Activated CD4-positive, alpha-beta memory T cell treated with anti-CD3 and anti-CD28 coated beads for 36 hours (primary cell): ENCODE measurements at regions of chr2 and their contacts with region 1.

Region 1: GRCh38 chr2:216412022-216412999 is at the start of gene SMARCAL1:
- DNase-seq: peak; percentile 99
- H3K4me3 Mint-ChIP-seq: peak within 1 kb of the TSS; percentile 95
- H3K27ac Mint-ChIP-seq: peak within 1 kb of the TSS; percentile 94
- H3K4me1 Mint-ChIP-seq: peaks cover 8% of the 10 kb centered on the region
- H3K27me3 Mint-ChIP-seq: peaks cover 2% of the 10 kb centered on the region
- total RNA-seq, gene SMARCAL1: 20.8 to 25.2 TPM

Region 2: DNA sequence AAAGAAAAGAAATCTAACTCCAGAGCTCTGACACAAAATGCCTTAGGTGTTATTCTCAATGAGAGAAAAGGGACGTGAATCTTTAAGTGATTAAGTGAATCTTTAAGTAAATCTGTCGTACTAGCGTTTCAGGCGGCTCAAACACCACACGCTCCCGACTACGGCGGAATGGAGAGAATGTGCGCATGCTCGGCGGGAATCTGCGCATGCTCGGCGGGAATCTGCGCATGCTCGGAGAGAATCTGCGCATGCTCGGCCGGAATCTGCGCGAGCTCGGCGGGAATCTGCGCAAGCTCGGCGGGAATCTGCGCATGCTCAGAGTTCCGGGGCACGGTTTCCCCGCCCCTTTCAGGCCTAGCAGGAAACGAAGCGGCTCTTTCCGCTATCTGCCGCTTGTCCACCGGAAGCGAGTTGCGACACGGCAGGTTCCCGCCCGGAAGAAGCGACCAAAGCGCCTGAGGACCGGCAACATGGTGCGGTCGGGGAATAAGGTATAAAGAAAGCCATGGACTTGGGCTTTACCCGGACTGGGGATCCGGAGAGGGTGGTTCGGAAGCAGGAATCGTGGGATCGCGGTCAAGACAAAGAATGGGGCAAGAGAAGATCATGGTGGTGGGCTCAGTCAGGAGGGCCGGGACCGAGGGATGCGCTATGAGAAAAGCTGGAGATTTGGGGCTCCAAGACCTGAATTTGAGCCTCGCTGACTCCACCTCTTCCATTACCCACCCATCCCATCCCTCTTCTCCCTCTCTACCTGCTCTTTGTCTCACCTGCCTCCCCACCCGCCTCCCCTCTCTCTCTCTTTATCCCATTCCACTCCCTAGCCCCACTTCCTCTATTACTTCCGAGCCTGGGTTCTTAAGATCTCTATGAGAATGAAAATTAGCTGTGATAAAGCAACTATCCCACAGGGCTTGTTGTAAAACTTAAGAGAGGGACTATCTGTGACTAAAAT is 303.1 kb before region 1 on chr2 and contains the start of gene XRCC5:
- CTCF ChIA-PET with region 1: interaction called, 4 read pairs
- POLR2A ChIA-PET with region 1: no interaction called
- intact Hi-C with region 1: loop called (anchors 1 kb)
- DNase-seq: peak; percentile 99
- H3K4me3 Mint-ChIP-seq: peak within 1 kb of the TSS; percentile 100
- H3K27ac Mint-ChIP-seq: peak within 1 kb of the TSS; percentile 100
- H3K4me1 Mint-ChIP-seq: peaks cover 51% of the 10 kb centered on the region
- H3K27me3 Mint-ChIP-seq: peaks cover 2% of the 10 kb centered on the region
- total RNA-seq, gene XRCC5: 510 to 515 TPM

Region 3: DNA sequence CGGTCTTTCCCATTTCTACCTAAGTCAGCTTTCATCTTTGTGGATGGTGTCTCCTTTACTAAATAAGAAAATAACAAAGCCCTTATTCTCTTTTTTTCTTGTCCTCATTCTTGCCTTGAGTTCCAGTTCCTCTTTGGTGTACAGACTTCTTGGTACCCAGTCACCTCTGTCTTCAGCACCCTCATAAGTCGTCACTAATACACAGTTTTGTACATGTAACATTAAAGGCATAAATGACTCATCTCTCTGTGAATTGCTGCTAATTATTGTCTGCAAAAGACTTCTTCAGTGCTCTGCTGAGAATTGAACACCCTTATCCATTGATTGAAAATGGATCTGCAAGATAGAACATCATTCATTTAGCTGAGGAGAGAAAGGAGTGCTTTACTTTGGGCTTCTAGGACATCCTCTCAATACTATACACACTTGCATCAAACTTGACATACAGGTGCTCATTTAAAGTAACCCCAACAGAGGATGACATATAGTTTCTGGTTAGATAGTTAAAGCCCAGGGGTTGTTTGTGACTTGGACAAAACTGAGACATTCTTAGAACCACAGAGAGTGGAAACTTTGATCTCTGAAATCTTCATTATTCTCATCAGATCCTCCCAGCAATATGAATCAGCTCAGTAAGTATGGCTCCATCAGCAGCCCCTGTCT is 206.1 kb before region 1 on chr2:
- CTCF ChIA-PET with region 1: no interaction called
- POLR2A ChIA-PET with region 1: no interaction called
- intact Hi-C with region 1: loop called (anchors 1 kb)
- DNase-seq: no peak
- H3K4me3 Mint-ChIP-seq: peak overlapping the region; percentile 9
- H3K27ac Mint-ChIP-seq: peak overlapping the region; percentile 92
- H3K4me1 Mint-ChIP-seq: peaks cover 63% of the 10 kb centered on the region
- H3K27me3 Mint-ChIP-seq: no peaks in the 10 kb centered on the region

Region 4: DNA sequence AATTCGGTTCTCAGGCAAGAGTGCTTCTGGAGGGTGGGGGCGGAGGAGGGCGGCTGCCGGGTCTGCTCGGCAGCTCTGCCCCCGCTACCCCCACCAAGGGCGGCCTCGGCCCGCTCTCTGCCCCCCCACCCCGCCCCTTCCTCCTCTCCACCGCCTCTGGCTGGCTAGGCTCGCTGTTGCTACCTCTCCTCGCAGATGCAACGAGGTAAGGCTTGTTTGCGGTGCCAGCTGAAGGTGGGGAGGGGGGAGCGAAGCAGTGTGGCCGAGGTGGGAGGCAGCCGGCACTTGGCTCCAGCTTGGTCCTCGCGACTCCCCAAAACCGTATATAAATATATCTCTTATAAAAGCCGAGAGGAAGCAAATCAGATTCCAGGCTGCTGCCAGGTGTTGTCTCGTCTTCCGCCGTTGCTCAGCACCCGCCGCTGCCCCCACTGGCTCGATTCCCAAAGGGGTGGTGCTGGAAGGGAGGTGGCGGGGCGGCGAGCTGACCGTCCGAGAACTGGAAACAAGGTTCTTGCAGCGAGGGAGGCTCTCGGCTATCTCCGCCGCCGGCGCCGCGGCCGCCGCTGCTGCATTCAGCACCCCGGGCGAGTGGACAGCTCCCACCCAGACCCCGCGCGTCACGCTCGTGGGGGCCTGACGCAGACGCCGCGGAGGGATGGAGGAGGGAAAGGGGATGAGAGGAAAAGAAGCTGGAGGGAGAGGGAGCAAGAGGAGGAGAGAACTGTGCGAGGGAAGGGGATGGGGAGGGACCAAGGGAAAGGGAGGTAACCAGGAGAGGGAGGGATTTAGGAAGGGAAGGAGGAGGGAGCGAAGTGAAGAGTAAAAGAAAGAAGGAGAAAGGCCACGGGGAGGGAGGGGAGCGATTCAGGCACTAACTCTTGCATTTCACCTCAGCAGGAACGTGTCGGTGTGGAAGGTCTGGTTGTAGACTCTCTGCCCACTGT is 40.3 kb before region 1 on chr2 and contains the start of gene MARCHF4:
- CTCF ChIA-PET with region 1: no interaction called
- POLR2A ChIA-PET with region 1: no interaction called
- intact Hi-C with region 1: loop called (anchors 2 kb)
- DNase-seq: peak; percentile 75
- H3K4me3 Mint-ChIP-seq: no peak within 1 kb of the TSS
- H3K27ac Mint-ChIP-seq: no peak within 1 kb of the TSS
- H3K4me1 Mint-ChIP-seq: peaks cover 11% of the 10 kb centered on the region
- H3K27me3 Mint-ChIP-seq: peaks cover 48% of the 10 kb centered on the region
- total RNA-seq, gene MARCHF4: not detected

Region 5: DNA sequence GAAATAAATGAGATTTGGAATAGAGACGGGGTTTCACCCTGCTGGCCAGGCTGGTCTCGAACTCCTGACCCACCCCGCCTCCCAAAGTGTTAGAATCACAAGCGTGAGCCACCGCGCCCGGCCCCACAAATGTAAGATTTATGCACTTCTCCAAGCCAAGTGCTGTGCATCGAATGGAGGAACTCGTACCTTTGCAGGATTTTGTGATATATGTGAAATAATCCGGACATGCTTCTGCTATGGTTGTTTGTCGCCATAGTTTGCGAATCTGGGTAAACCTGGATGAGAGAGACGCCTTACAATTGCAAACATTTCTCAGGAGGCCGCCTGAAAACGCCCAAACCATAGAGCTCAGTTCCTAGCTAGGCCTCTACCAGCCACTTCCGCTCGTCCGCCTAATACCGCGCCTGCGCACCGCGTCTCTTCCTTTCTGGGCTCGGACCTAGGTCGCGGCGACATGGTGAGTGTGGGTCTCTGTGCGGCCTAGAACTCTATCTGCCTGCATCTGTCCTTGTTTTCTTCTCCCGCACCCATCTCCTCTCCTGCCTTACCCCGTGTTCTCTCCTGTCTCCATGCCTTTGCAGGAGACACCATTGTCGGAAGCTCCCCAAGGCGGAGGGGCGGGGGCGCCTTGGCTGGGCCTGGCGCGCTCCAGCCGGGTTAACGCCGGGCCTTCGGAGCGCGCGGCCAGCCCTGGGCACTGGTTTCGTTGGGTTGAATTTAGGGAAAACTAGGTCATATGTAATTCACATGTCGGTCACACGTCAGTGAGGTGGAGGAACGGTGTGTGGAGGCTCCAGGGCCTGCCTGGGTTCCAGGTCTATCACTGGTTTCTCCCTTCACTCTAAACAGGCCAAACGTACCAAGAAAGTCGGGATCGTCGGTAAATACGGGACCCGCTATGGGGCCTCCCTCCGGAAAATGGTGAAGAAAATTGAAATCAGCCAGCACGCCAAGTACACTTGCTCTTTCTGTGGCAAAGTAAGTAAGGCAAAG is 86.4 kb after region 1 on chr2 and contains the start of gene RPL37A:
- CTCF ChIA-PET with region 1: no interaction called
- POLR2A ChIA-PET with region 1: interaction called, 8 read pairs
- intact Hi-C with region 1: loop called (anchors 1 kb)
- DNase-seq: peak; percentile 93
- H3K4me3 Mint-ChIP-seq: peak within 1 kb of the TSS; percentile 97
- H3K27ac Mint-ChIP-seq: peak within 1 kb of the TSS; percentile 99
- H3K4me1 Mint-ChIP-seq: peaks cover 45% of the 10 kb centered on the region
- H3K27me3 Mint-ChIP-seq: no peaks in the 10 kb centered on the region
- total RNA-seq, gene RPL37A: 4,165 to 4,237 TPM

Region 6: GRCh38 chr2:217798743-217799562 is 1386.6 kb after region 1 on chr2:
- CTCF ChIA-PET with region 1: no interaction called
- POLR2A ChIA-PET with region 1: no interaction called
- intact Hi-C with region 1: no loop called
- DNase-seq: peak; percentile 3
- H3K4me3 Mint-ChIP-seq: no peak overlapping the region
- H3K27ac Mint-ChIP-seq: no peak overlapping the region
- H3K4me1 Mint-ChIP-seq: no peaks in the 10 kb centered on the region
- H3K27me3 Mint-ChIP-seq: peaks cover 2% of the 10 kb centered on the region